ENCODE measurements at regions of chr3 and their contacts with region 1.

Region 1: DNA sequence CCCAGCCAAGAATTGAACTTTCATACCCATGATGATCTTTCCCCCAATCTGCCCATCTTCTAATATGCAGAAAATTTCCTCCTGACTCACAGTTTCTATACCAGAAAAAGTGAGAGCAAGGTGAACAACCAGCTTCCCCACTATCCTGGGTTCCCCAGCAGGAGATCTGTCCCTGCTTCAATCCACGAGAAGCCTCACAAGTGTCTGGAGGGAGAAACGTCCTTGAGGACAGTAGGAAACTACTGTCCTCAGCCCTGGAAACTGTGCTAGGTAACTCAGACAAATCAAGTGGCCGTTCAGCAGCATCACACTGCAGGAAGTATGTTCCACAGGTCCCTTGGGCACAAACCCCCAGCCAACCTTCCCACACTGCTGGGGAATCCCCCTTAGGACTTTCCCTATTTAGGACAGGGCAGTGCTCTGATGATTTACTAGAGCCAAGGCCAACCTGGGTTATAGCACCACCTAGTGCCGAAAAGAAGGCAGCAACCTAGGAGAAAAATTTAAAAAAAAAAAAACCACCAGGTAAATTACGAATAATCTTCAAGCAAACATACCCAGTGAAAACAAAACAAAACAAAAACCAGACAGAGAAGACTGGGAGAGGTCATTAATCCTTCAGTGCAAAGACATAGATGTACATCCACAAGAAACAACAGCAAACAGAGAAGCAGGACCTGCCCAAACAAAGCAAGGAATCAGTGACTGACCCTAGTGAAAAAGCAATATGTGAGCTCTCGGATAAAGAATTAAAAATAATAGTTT is 36.0 kb downstream of the MORC1 start:
- DNase-seq: peak; percentile 39 to 85 (median 52)
- H3K4me3 ChIP-seq: no peak overlapping the region
- H3K4me3 Mint-ChIP-seq: no peak overlapping the region
- H3K27ac ChIP-seq: no peak overlapping the region
- H3K27ac Mint-ChIP-seq: peak overlapping the region in 2 of 7 donors; percentile 44 to 79
- H3K4me1 ChIP-seq: no peaks in the 10 kb centered on the region
- H3K4me1 Mint-ChIP-seq: no peaks in the 10 kb centered on the region
- H3K27me3 ChIP-seq: no peaks in the 10 kb centered on the region
- H3K27me3 Mint-ChIP-seq: peaks cover 0 to 1% (median 1%) of the 10 kb centered on the region in 3 donors
- CTCF ChIP-seq: peak; percentile 91

Region 2: DNA sequence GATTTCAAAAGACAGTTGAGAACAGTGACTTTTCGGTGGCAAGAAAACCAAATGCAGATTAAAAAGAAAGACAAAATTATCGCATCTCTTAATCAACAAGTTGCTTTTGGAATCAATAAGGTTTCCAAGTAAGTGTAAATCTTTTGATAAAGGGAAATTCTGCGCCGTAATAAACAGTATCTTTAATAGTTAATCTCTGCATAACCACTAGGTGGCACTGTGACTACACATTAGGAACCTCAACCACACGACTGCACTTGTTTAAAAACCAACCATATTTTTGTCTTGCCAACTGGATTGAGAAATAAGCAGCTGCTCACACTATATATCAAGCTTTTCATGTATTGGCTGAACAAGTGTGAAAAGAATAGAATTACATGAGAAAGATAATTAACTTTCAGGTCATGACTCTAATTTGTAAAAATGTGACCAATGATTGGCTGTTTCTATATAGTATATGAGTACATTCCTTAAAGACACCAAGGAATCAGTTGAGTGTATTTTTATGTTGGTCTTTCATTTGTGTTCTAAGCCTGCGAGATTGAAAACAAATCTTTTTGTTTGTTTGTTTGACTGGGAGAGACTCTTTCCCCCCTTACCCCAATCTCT is 419.7 kb before region 1 on chr3:
- intact Hi-C with region 1: loop called in 1 of 2 experiments (anchors 5 kb)
- DNase-seq: peak; percentile 27 to 65 (median 51)
- H3K4me3 ChIP-seq: no peak overlapping the region
- H3K4me3 Mint-ChIP-seq: no peak overlapping the region
- H3K27ac ChIP-seq: no peak overlapping the region
- H3K27ac Mint-ChIP-seq: no peak overlapping the region
- H3K4me1 ChIP-seq: no peaks in the 10 kb centered on the region
- H3K4me1 Mint-ChIP-seq: peaks cover 3% of the 10 kb centered on the region
- H3K27me3 ChIP-seq: no peaks in the 10 kb centered on the region
- H3K27me3 Mint-ChIP-seq: no peaks in the 10 kb centered on the region
- CTCF ChIP-seq: peak; percentile 82

Region 3: DNA sequence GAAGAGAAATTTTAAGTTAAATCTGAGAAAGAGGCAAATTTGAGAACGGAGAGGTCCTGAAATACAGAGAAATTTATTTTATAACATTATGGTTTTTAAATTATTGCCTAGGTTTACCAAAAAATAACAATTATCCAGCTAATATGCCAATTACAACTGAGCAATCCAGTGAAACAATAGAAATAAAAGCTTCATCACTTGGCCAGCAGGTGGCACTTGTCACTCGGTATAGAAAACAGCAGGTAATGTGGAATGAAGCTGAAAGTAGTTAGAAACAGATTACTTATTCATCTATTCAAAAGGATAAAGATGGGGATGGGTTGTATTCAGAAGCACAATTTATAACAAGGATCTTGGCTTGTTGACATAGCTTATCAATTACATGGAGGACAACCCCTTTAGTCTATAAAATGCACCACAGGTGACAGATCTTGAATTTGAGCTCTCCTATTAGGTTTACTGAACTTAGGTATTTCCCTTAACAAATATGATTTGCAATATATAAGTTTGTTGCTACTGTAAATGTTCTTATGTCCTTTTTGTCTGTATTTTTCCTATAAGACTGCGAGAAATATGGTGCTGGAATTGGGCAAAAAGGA is 58.2 kb before region 1 on chr3:
- intact Hi-C with region 1: loop called (anchors 2 kb)
- DNase-seq: peak; percentile 10 to 45 (median 38)
- H3K4me3 ChIP-seq: no peak overlapping the region
- H3K4me3 Mint-ChIP-seq: no peak overlapping the region
- H3K27ac ChIP-seq: no peak overlapping the region
- H3K27ac Mint-ChIP-seq: no peak overlapping the region
- H3K4me1 ChIP-seq: peaks cover 0 to 3% of the 10 kb centered on the region in 2 donors
- H3K4me1 Mint-ChIP-seq: no peaks in the 10 kb centered on the region
- H3K27me3 ChIP-seq: no peaks in the 10 kb centered on the region
- H3K27me3 Mint-ChIP-seq: peaks cover 0 to 2% (median 0%) of the 10 kb centered on the region in 3 donors
- CTCF ChIP-seq: peak; percentile 82

Region 4: GRCh38 chr3:109059264-109059663 is 22.7 kb before region 1 on chr3:
- intact Hi-C with region 1: no loop called
- DNase-seq: peak; percentile 34 to 64 (median 61)
- H3K4me3 ChIP-seq: peak overlapping the region in 1 of 3 experiments; percentile 3
- H3K4me3 Mint-ChIP-seq: peak overlapping the region in 1 of 2 donors; percentile 59
- H3K27ac ChIP-seq: no peak overlapping the region
- H3K27ac Mint-ChIP-seq: peak overlapping the region in 4 of 7 donors; percentile 43 to 72 (median 57)
- H3K4me1 ChIP-seq: peaks cover 0 to 12% of the 10 kb centered on the region in 2 donors
- H3K4me1 Mint-ChIP-seq: peaks cover 14% of the 10 kb centered on the region
- H3K27me3 ChIP-seq: no peaks in the 10 kb centered on the region
- H3K27me3 Mint-ChIP-seq: peaks cover 0 to 4% (median 1%) of the 10 kb centered on the region in 3 donors
- CTCF ChIP-seq: no peak